ENCODE measurements at regions of chrX and their contacts with region 1.

Region 1: GRCh38 chrX:97692575-97692974 is 808.9 kb downstream of the RPA4 start:
- DNase-seq: no peak
- H3K4me3 ChIP-seq: no peak overlapping the region
- H3K4me3 Mint-ChIP-seq: no peak overlapping the region
- H3K27ac Mint-ChIP-seq: no peak overlapping the region
- H3K4me1 ChIP-seq: no peaks in the 10 kb centered on the region
- H3K4me1 Mint-ChIP-seq: no peaks in the 10 kb centered on the region
- H3K27me3 ChIP-seq: no peaks in the 10 kb centered on the region
- H3K27me3 Mint-ChIP-seq: peaks cover 5% of the 10 kb centered on the region
- CTCF ChIP-seq: no peak

Region 2: GRCh38 chrX:97995834-97996233 is 303.3 kb after region 1 on chrX:
- CTCF ChIA-PET with region 1: no interaction called
- POLR2A ChIA-PET with region 1: no interaction called
- intact Hi-C with region 1: loop called (anchors 5 kb)
- DNase-seq: no peak
- H3K4me3 ChIP-seq: no peak overlapping the region
- H3K4me3 Mint-ChIP-seq: no peak overlapping the region
- H3K27ac Mint-ChIP-seq: no peak overlapping the region
- H3K4me1 ChIP-seq: no peaks in the 10 kb centered on the region
- H3K4me1 Mint-ChIP-seq: no peaks in the 10 kb centered on the region
- H3K27me3 ChIP-seq: no peaks in the 10 kb centered on the region
- H3K27me3 Mint-ChIP-seq: no peaks in the 10 kb centered on the region
- CTCF ChIP-seq: no peak

Measured in Caco-2 (cell line).